H1 (cell line): ENCODE measurements at regions of chr6 and their contacts with region 1.

Region 1: DNA sequence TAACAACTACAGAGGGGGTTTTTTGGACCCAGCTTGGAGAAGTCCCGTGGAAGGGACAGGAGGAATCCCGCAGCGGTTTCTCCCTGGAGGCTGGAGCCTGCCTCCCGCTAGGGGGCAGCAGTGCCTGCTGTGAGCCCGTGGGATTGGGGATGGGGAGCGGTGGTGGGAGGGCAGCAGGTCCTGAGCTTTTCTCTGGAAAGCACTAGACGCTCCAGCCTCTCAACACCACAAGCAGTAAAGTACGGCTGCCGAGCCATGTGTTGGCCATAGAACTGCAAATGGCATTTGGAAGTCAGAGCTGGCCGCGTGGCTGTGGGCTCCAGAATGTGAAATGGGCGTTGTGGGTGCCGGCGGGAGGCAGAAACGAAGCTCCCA is 47.7 kb downstream of the GMPR start:
- DNase-seq: peak; percentile 43 to 92
- H3K4me3 ChIP-seq: peak overlapping the region in 1 of 4 experiments; percentile 38; a peak in 1 of 8 replicates
- H3K27ac ChIP-seq: no peak overlapping the region
- H3K4me1 ChIP-seq: 0 out of 7 replicates have a peak, but pooled peaks cover 0 to 2% (median 0%) of the 10 kb centered on the region in 4 experiments
- H3K27me3 ChIP-seq: no peaks in the 10 kb centered on the region
- CTCF ChIP-seq: peak; percentile 86 to 93 (median 92)
- EP300 ChIP-seq: no peak
- POLR2A ChIP-seq: no peak
- RAD21 ChIP-seq: peak; percentile 78 to 86

Region 2: GRCh38 chr6:16238057-16238962 is 47.8 kb before region 1 on chr6 and contains the start of gene GMPR:
- CTCF ChIA-PET with region 1: interaction called, 16 read pairs
- POLR2A ChIA-PET with region 1: no interaction called
- DNase-seq: peak in 1 of 2 experiments; percentile 63
- H3K4me3 ChIP-seq: peak within 1 kb of the TSS; percentile 39 to 67 (median 64)
- H3K27ac ChIP-seq: no peak within 1 kb of the TSS
- H3K4me1 ChIP-seq: peaks cover 0 to 6% (median 3%) of the 10 kb centered on the region in 4 experiments; a peak in 4 of 7 replicates
- H3K27me3 ChIP-seq: peaks cover 12 to 36% (median 30%) of the 10 kb centered on the region in 4 experiments
- CTCF ChIP-seq: no peak
- EP300 ChIP-seq: no peak
- POLR2A ChIP-seq: no peak
- RAD21 ChIP-seq: no peak
- total RNA-seq, gene GMPR: 0.99 and 1.2 TPM in 2 replicates

Region 3: DNA sequence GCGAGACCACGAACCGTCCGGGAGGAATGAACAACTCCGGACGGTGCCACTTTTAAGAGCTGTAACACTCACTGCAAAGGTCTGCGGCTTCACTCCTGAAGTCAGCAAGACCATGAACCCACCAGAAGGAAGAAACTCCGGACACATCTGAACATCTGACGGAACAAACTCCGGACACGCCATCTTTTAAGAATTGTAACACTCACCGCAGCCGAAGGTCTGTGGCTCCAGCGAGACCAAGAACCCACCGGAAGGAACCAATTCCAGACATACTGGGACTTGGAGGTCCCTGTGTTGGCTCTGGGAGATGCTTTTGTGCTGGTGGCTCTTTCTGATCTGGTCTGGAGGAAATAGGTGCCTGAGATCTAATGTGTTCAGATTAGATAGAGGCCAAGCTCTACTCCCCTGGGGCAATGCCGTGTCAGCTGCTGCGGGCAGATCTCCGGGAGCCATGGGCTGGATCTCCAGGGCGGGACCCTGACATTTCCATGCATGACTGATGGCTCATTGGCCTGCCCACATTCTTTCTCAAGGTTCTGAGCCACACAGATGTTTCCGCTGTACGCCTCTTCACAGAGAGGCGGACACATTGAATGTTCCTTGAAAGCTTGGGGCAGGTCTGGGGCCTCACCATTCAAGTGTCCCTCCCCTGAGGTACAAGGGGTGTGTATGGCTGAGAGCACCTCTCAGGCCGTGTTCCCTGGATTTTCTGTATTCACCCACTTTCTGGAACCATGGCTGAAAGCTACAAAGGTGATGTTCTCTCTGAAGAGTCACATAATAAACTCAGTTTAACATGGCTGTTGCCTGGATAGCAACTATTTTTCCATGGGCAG is 18.5 kb before region 1 on chr6:
- CTCF ChIA-PET with region 1: interaction called, 18 read pairs
- POLR2A ChIA-PET with region 1: no interaction called
- DNase-seq: no peak
- H3K4me3 ChIP-seq: no peak overlapping the region
- H3K27ac ChIP-seq: no peak overlapping the region
- H3K4me1 ChIP-seq: no peaks in the 10 kb centered on the region
- H3K27me3 ChIP-seq: no peaks in the 10 kb centered on the region
- CTCF ChIP-seq: no peak
- EP300 ChIP-seq: no peak
- POLR2A ChIP-seq: no peak
- RAD21 ChIP-seq: no peak

Region 4: GRCh38 chr6:16301511-16301910 is 15.4 kb after region 1 on chr6:
- CTCF ChIA-PET with region 1: interaction called, 18 read pairs
- POLR2A ChIA-PET with region 1: interaction called, 5 read pairs
- DNase-seq: no peak
- H3K4me3 ChIP-seq: no peak overlapping the region
- H3K27ac ChIP-seq: no peak overlapping the region
- H3K4me1 ChIP-seq: peaks cover 0 to 18% (median 12%) of the 10 kb centered on the region in 4 experiments; a peak in 6 of 7 replicates
- H3K27me3 ChIP-seq: no peaks in the 10 kb centered on the region
- CTCF ChIP-seq: no peak
- EP300 ChIP-seq: no peak
- POLR2A ChIP-seq: no peak
- RAD21 ChIP-seq: no peak

Region 5: DNA sequence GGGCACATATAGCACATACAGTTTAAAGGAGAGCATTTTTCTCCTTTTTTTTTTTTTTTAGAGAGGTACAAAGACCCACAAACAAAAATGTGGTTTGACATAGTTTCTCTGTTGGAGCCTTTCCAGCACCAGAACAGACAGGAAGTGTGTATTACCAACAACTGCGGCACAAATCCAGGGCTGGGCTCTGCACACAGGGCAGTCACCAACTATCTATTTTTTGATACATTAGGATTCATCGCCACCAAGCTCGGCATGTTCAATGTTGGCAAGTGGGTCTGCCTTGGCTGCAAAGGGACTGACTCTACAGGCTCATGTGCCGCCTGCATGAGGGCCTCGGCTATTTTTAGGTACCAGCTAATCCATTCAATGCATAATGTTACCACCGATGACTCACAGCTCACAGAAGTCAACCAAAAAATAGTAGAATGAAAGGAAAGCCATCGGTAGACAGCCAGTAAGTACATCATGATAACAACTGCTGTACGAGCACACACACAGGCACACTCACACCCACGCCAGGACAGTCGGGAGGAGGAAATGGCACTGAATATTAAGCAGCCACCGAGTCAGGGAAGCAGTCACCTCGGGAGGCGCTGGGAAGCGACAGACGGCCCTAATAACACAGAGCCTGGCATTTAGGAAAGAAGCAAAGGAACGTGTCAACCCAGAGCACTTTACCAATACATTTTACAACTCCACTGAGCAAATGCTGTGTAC is 33.8 kb after region 1 on chr6:
- CTCF ChIA-PET with region 1: interaction called, 12 read pairs
- POLR2A ChIA-PET with region 1: no interaction called
- DNase-seq: no peak
- H3K4me3 ChIP-seq: no peak overlapping the region
- H3K27ac ChIP-seq: no peak overlapping the region
- H3K4me1 ChIP-seq: peaks cover 6 to 14% (median 12%) of the 10 kb centered on the region in 4 experiments
- H3K27me3 ChIP-seq: no peaks in the 10 kb centered on the region
- CTCF ChIP-seq: no peak
- EP300 ChIP-seq: no peak
- POLR2A ChIP-seq: no peak
- RAD21 ChIP-seq: no peak